Panc1 (cell line): ENCODE measurements at regions of chr10 and their contacts with region 1.

Region 1: GRCh38 chr10:123043409-123043925 is 34.7 kb downstream of the ACADSB start:
- DNase-seq: peak; percentile 65
- ATAC-seq: peak; percentile 98
- H3K4me3 ChIP-seq: no peak overlapping the region
- H3K27ac ChIP-seq: no peak overlapping the region
- H3K4me1 ChIP-seq: no peaks in the 10 kb centered on the region
- H3K27me3 ChIP-seq: no peaks in the 10 kb centered on the region
- CTCF ChIP-seq: peak; percentile 93

Region 2: DNA sequence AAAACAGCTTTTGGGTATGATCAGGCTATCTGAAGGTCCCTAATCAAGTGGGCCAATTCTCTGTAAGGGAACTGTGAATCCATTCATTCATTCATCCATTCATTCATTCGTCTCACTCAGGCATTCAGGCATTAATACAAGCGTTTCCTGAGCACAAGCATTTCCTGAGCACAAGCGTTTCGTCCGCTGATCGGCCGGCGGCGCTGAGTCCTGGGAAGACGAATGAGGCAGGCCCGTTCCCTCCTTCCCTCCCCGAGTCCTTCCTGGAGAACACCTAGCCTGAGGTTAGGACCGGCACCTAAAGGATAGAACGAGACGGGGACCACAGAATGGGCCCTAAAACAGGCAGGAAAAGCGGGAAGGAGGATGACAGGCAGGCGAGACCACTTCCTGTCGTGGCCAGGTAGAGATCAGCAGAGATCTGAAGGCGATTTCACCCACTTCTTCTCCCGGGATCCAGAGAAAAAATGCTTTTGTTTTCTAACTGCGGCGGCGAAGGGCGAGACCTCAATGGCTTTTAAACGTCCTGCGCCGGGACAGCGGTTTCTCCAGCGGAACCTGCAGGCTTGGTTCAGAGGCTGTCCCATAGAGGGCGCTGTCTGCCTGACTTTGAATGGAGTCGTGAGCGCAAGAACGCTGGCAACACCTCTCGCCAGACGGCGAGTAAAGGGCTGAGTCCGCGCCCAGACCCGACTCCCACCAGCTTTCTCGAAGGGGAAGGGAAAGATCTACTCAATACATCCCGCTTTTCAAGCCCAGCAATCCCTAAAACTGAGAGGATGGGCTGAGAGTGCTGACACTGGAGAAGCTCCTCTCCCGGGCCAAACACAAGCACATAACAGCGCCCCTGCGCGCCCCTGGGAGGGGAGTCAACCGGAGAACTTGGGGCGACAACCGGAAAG is 89.4 kb after region 1 on chr10:
- CTCF ChIA-PET with region 1: no interaction called
- POLR2A ChIA-PET with region 1: no interaction called
- in situ Hi-C with region 1: no loop called
- intact Hi-C with region 1: loop called (anchors 1 kb)
- DNase-seq: peak; percentile 71
- ATAC-seq: peak; percentile 82
- H3K4me3 ChIP-seq: peak overlapping the region; percentile 34 to 41
- H3K27ac ChIP-seq: 0 out of 2 replicates have a peak overlapping the region, but pooled peaks have one; percentile 17
- H3K4me1 ChIP-seq: peaks cover 11% of the 10 kb centered on the region; the same call in 1 of the 2 replicates
- H3K27me3 ChIP-seq: no peaks in the 10 kb centered on the region; the same call in 1 of the 2 replicates
- CTCF ChIP-seq: peak; percentile 98

Region 3: GRCh38 chr10:123194056-123194455 is 150.6 kb after region 1 on chr10:
- CTCF ChIA-PET with region 1: no interaction called
- POLR2A ChIA-PET with region 1: no interaction called
- in situ Hi-C with region 1: no loop called
- intact Hi-C with region 1: no loop called
- DNase-seq: no peak
- ATAC-seq: no peak
- H3K4me3 ChIP-seq: no peak overlapping the region
- H3K27ac ChIP-seq: no peak overlapping the region
- H3K4me1 ChIP-seq: no peaks in the 10 kb centered on the region
- H3K27me3 ChIP-seq: no peaks in the 10 kb centered on the region
- CTCF ChIP-seq: no peak

Region 4: DNA sequence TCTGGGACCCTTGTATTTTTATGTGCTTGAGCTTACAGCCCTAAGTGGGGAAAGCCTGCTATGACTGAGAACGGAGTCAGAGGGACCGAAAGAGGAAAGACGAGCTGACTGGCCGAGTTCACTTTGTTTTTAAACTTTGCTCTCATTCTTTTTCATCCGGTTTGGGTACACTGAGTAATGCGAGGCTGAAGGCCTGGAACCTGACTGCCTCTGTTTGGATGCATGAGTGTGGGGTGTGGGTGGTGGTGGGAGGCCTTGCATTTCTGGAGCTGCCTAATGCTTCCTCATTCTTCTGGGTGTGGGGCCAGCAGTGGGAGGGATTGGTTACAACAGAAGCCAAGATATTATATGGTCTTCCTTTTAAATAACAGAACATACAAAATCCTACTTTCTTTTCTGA is 266.3 kb after region 1 on chr10:
- CTCF ChIA-PET with region 1: no interaction called
- POLR2A ChIA-PET with region 1: no interaction called
- in situ Hi-C with region 1: no loop called
- intact Hi-C with region 1: no loop called
- DNase-seq: no peak
- ATAC-seq: no peak
- H3K4me3 ChIP-seq: no peak overlapping the region
- H3K27ac ChIP-seq: no peak overlapping the region
- H3K4me1 ChIP-seq: no peaks in the 10 kb centered on the region
- H3K27me3 ChIP-seq: no peaks in the 10 kb centered on the region
- CTCF ChIP-seq: no peak

Region 5: GRCh38 chr10:123380497-123381085 is 337.1 kb after region 1 on chr10:
- CTCF ChIA-PET with region 1: interaction called, 3 read pairs
- POLR2A ChIA-PET with region 1: no interaction called
- in situ Hi-C with region 1: no loop called
- intact Hi-C with region 1: loop called (anchors 2 kb)
- DNase-seq: peak; percentile 39
- ATAC-seq: peak; percentile 80; the same call in 1 of the 2 replicates
- H3K4me3 ChIP-seq: no peak overlapping the region
- H3K27ac ChIP-seq: no peak overlapping the region
- H3K4me1 ChIP-seq: no peaks in the 10 kb centered on the region
- H3K27me3 ChIP-seq: no peaks in the 10 kb centered on the region
- CTCF ChIP-seq: peak; percentile 74

Region 6: DNA sequence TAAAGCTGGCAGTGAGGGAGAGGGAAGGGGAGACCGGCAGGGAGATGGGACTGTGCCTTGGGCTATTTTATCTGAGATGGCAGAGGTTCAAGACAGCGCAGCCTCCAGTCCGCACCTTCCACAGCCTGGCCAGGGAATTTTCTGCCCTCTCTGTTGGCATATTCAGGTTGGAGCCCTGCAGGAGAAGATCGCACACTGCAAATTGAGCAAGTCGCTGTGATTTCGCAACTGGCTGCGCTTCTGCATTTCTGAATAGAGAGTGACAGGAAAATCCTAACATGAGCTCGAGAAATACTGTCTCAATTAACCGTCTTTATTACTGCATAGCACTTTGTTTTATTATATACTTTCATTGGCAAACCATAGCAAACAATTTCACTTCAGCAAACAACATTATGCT is 383.9 kb after region 1 on chr10:
- CTCF ChIA-PET with region 1: no interaction called
- POLR2A ChIA-PET with region 1: interaction called, 11 read pairs
- in situ Hi-C with region 1: no loop called
- intact Hi-C with region 1: no loop called
- DNase-seq: no peak
- ATAC-seq: no peak
- H3K4me3 ChIP-seq: no peak overlapping the region
- H3K27ac ChIP-seq: no peak overlapping the region
- H3K4me1 ChIP-seq: no peaks in the 10 kb centered on the region
- H3K27me3 ChIP-seq: peaks cover 54% of the 10 kb centered on the region
- CTCF ChIP-seq: no peak

Region 7: DNA sequence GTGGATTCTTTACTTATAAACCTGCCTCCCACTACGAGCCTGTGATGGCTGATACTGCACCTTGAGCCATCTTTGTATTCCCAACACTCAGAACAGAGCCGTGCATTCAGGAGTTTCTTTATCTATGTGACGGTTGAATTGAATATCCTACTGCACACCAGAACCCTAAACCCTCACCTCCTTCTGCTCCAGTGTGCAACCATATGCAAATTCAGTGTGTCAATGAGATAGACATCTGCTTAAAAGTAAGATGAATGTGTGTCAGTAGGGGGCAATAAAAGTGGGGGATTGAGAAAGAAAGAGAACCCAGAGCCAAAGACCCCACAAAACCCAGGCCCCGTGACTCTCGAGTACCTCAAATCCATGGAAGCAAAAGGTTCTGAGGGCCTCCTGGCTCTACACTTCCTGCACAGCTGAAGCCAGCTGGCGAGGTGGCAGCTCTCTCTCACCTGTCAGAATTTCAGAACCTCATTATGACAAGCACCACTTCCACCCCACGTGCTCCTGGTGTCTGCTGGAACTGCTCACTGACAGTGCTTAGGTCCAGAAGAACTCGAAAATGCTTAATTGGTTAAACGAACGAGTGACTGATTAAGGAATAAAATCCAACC is 479.3 kb after region 1 on chr10:
- CTCF ChIA-PET with region 1: no interaction called
- POLR2A ChIA-PET with region 1: interaction called, 13 read pairs
- in situ Hi-C with region 1: no loop called
- intact Hi-C with region 1: no loop called
- DNase-seq: no peak
- ATAC-seq: no peak
- H3K4me3 ChIP-seq: no peak overlapping the region
- H3K27ac ChIP-seq: no peak overlapping the region
- H3K4me1 ChIP-seq: no peaks in the 10 kb centered on the region
- H3K27me3 ChIP-seq: peaks cover 4% of the 10 kb centered on the region; the same call in 1 of the 2 replicates
- CTCF ChIP-seq: no peak